IMR-90 (cell line): ENCODE measurements at regions of chr10 and their contacts with region 1.

Region 1: DNA sequence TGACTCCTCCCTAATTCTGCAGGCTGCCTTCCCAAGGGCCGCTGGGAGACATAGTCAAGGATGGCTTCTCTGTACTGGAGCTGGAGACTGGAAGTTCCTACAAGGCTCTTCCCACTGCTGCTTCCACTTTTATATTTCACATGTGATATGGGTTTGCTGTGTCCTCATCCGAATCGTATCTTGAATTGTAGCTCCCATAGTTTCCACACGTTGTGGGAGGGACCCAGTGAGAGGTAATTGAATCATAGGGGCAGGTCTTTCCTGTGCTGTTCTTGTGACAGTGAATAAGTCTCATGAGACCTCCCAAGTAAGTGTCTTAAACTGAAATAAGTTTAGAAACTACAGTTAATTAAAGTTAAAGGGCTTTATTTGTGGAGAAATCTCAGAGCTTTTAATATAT is 47.0 kb upstream of the BICC1 start:
- DNase-seq: no peak
- ATAC-seq: no peak
- H3K4me3 ChIP-seq: no peak overlapping the region
- H3K27ac ChIP-seq: no peak overlapping the region
- H3K4me1 ChIP-seq: no peaks in the 10 kb centered on the region
- H3K27me3 ChIP-seq: no peaks in the 10 kb centered on the region
- CTCF ChIP-seq: no peak
- POLR2A ChIP-seq: no peak
- RAD21 ChIP-seq: no peak

Region 2: GRCh38 chr10:58237014-58237830 is 228.4 kb before region 1 on chr10:
- CTCF ChIA-PET with region 1: no interaction called
- POLR2A ChIA-PET with region 1: no interaction called
- dilution Hi-C with region 1: no loop called
- in situ Hi-C with region 1: no loop called
- intact Hi-C with region 1: no loop called
- DNase-seq: peak; percentile 92
- ATAC-seq: peak; percentile 86
- H3K4me3 ChIP-seq: no peak overlapping the region
- H3K27ac ChIP-seq: peak overlapping the region; percentile 52; the same call in 1 of the 2 replicates
- H3K4me1 ChIP-seq: peaks cover 18% of the 10 kb centered on the region
- H3K27me3 ChIP-seq: no peaks in the 10 kb centered on the region
- CTCF ChIP-seq: no peak
- POLR2A ChIP-seq: no peak
- RAD21 ChIP-seq: no peak

Region 3: GRCh38 chr10:58477122-58477521 is 11.5 kb after region 1 on chr10:
- CTCF ChIA-PET with region 1: no interaction called
- POLR2A ChIA-PET with region 1: interaction called, 25 read pairs
- dilution Hi-C with region 1: no loop called
- in situ Hi-C with region 1: no loop called
- intact Hi-C with region 1: no loop called
- DNase-seq: peak; percentile 51
- ATAC-seq: peak; percentile 50
- H3K4me3 ChIP-seq: no peak overlapping the region
- H3K27ac ChIP-seq: peak overlapping the region; percentile 23
- H3K4me1 ChIP-seq: peaks cover 13% of the 10 kb centered on the region
- H3K27me3 ChIP-seq: no peaks in the 10 kb centered on the region
- CTCF ChIP-seq: no peak
- POLR2A ChIP-seq: no peak
- RAD21 ChIP-seq: no peak

Region 4: GRCh38 chr10:58593008-58593407 is 127.4 kb after region 1 on chr10:
- CTCF ChIA-PET with region 1: no interaction called
- POLR2A ChIA-PET with region 1: no interaction called
- dilution Hi-C with region 1: no loop called
- in situ Hi-C with region 1: no loop called
- intact Hi-C with region 1: no loop called
- DNase-seq: no peak
- ATAC-seq: no peak
- H3K4me3 ChIP-seq: no peak overlapping the region
- H3K27ac ChIP-seq: no peak overlapping the region
- H3K4me1 ChIP-seq: peaks cover 2% of the 10 kb centered on the region; the same call in 1 of the 2 replicates
- H3K27me3 ChIP-seq: no peaks in the 10 kb centered on the region
- CTCF ChIP-seq: no peak
- POLR2A ChIP-seq: no peak
- RAD21 ChIP-seq: no peak